ENCODE measurements at regions of chr2 and their contacts with region 1.

Region 1: GRCh38 chr2:3581367-3582262 is 6.6 kb downstream of the RPS7 start:
- DNase-seq: no peak
- H3K4me3 Mint-ChIP-seq: no peak overlapping the region
- H3K27ac Mint-ChIP-seq: no peak overlapping the region
- H3K4me1 Mint-ChIP-seq: peaks cover 30% of the 10 kb centered on the region
- H3K27me3 Mint-ChIP-seq: no peaks in the 10 kb centered on the region

Region 2: GRCh38 chr2:3595985-3596384 is 14.4 kb after region 1 on chr2:
- intact Hi-C with region 1: loop called (anchors 2 kb)
- DNase-seq: peak; percentile 71
- H3K4me3 Mint-ChIP-seq: no peak overlapping the region
- H3K27ac Mint-ChIP-seq: no peak overlapping the region
- H3K4me1 Mint-ChIP-seq: peaks cover 11% of the 10 kb centered on the region
- H3K27me3 Mint-ChIP-seq: peaks cover 20% of the 10 kb centered on the region

Region 3: GRCh38 chr2:4556135-4556896 is 974.7 kb after region 1 on chr2:
- intact Hi-C with region 1: no loop called
- DNase-seq: no peak
- H3K4me3 Mint-ChIP-seq: no peak overlapping the region
- H3K27ac Mint-ChIP-seq: no peak overlapping the region
- H3K4me1 Mint-ChIP-seq: no peaks in the 10 kb centered on the region
- H3K27me3 Mint-ChIP-seq: no peaks in the 10 kb centered on the region

Measured in activated CD4-positive, alpha-beta T cell treated with anti-CD3 and anti-CD28 coated beads, Interleukin-2, amount 10 ng/mL, durations not matched to agents 24 days and 14 days (primary cell).